H1 (cell line): ENCODE measurements at regions of chr3 and their contacts with region 1.

Region 1: DNA sequence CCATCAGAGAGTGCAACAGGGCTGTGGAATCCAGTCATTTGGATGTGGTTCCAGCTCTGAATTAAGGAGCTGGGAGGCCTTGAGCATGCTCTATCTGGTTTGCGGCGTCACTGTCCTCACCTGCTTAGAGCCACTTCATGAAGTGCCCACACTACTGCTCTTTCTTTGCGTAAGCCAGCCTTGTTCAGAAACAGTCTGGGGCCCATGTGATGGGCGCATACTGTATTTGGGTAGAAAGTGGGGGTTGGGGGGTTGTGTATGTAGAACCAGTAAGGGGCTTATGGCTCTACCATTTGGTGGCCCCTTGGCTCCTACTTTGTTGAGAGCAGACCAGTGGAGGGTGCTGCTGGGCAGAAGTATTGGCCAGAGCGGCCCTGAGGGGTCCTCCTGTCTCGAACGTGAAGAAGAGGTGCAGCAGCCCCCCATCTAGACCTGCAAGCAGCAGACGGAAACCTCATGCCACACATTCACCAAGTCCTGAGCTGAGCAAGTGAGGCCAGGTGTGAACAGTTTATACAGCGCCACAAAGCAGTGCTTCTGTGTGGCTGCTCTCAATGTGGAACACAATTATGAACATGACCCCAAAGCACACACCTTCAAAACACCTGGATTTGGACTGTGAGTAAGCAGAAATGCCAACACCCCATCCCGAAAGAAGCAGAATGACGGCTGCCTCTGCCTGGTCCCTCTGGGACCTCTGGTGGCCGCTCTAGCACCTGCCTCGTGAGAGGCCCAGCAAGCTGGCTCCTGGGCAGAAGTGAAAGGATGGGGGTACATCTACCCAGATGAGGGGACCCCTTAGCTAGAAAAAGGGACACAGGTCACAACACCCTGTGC is 26.6 kb downstream of the SRPRB start:
- DNase-seq: peak in 1 of 2 experiments; percentile 42
- H3K4me3 ChIP-seq: no peak overlapping the region
- H3K27ac ChIP-seq: no peak overlapping the region
- H3K4me1 ChIP-seq: no peaks in the 10 kb centered on the region
- H3K27me3 ChIP-seq: no peaks in the 10 kb centered on the region
- CTCF ChIP-seq: peak in 2 of 3 experiments; percentile 47 to 52; a peak in 3 of 4 replicates
- EP300 ChIP-seq: no peak
- POLR2A ChIP-seq: no peak
- RAD21 ChIP-seq: peak; percentile 51 to 67

Region 2: GRCh38 chr3:133821767-133822638 is 10.2 kb before region 1 on chr3:
- CTCF ChIA-PET with region 1: interaction called, 75 read pairs
- POLR2A ChIA-PET with region 1: interaction called, 7 read pairs
- DNase-seq: peak in 1 of 2 experiments; percentile 38
- H3K4me3 ChIP-seq: no peak overlapping the region
- H3K27ac ChIP-seq: no peak overlapping the region; the same call in 1 of the 2 replicates
- H3K4me1 ChIP-seq: peaks cover 4 to 15% (median 7%) of the 10 kb centered on the region in 4 experiments; a peak in 5 of 7 replicates
- H3K27me3 ChIP-seq: no peaks in the 10 kb centered on the region
- CTCF ChIP-seq: peak in 2 of 3 experiments; percentile 35 to 58; a peak in 2 of 4 replicates
- EP300 ChIP-seq: no peak
- POLR2A ChIP-seq: no peak
- RAD21 ChIP-seq: peak; percentile 32 to 49; a peak in 3 of 4 replicates

Region 3: DNA sequence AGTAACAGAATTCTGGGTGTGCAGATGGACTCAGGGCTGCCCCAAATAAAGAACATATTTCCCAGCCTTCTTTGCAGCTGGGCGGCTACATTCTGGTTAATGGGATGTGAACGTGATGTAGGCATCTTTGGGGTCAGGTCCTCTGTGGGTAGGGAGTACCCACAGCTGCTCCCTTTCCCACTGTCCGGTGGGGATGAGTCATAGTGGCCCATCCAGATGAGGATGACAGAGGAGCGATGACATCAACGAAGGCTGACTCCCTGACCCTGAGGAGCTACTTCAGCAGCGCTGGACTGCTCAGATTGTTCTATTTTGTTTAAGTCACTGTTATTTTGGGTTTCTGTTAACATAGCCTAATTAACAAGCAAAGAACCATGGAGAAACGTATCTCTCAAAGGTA is 11.4 kb after region 1 on chr3:
- CTCF ChIA-PET with region 1: interaction called, 21 read pairs
- POLR2A ChIA-PET with region 1: no interaction called
- DNase-seq: no peak
- H3K4me3 ChIP-seq: no peak overlapping the region
- H3K27ac ChIP-seq: no peak overlapping the region
- H3K4me1 ChIP-seq: peaks cover 0 to 2% (median 0%) of the 10 kb centered on the region in 4 experiments; a peak in 1 of 7 replicates
- H3K27me3 ChIP-seq: no peaks in the 10 kb centered on the region
- CTCF ChIP-seq: no peak
- EP300 ChIP-seq: no peak
- POLR2A ChIP-seq: no peak
- RAD21 ChIP-seq: no peak

Region 4: DNA sequence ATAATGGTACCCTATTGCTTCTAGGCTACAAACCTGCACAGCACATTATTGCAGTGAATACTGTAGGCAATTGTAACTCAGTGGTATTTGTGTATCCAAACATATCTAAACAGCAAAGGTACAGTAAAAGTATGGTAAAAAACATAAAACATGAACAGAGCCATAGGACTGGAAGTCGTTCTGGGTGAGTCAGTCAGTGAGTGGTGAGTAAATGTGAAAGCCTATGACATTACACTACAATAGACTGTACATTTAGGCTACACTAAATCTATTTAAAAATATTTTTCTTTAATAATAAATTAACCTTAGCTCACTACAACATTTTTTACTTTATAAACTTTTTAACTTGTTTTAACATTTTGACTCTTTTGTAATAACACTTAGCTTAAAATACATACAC is 42.2 kb after region 1 on chr3:
- CTCF ChIA-PET with region 1: interaction called, 10 read pairs
- POLR2A ChIA-PET with region 1: no interaction called
- DNase-seq: no peak
- H3K4me3 ChIP-seq: no peak overlapping the region
- H3K27ac ChIP-seq: no peak overlapping the region
- H3K4me1 ChIP-seq: peaks cover 0 to 3% (median 0%) of the 10 kb centered on the region in 4 experiments; a peak in 3 of 7 replicates
- H3K27me3 ChIP-seq: no peaks in the 10 kb centered on the region
- CTCF ChIP-seq: no peak
- EP300 ChIP-seq: no peak
- POLR2A ChIP-seq: no peak
- RAD21 ChIP-seq: no peak

Region 5: DNA sequence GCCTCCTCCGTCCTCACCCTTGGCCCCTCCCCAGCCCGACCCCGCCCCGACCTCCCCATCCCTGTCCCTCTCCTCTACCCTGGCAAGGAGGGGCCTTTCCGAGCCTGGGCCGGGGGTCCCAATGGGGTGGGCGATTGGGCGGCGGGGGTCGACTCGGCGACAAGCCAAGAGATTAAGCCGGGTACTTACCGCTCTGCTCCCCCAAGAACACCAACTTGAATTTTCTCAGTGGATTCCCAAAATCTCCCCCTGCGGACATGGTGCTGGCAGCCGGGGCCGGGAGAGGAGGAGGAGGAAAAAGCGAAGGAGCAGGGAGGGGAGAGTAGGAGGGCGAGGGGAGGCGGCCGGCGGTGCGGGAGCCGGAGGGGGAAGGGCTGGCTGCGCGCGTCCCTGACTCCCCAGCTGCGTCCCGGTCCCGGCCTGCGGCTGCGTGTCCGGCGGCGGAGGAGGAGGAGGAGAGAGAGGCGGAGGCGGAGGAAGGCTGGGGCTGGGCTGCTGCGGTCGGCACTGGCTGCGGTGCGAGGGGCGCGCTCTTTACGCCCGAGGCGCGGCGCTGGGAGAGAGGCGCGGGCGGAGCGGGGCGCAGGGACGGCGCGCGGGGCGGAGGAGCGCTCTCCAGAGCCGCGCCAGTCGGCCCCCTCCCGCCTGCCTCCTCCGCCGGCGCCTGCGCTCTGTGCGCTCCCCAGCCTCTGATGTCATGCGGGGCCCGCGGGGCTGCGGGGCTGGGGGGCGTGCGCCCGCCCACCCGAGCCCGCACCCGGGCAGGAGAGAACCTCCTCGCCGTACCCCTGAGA is 63.2 kb after region 1 on chr3 and contains the start of gene RAB6B:
- CTCF ChIA-PET with region 1: interaction called, 14 read pairs
- POLR2A ChIA-PET with region 1: no interaction called
- DNase-seq: peak in 1 of 2 experiments; percentile 82
- H3K4me3 ChIP-seq: peak within 1 kb of the TSS; percentile 71 to 94 (median 79)
- H3K27ac ChIP-seq: no peak within 1 kb of the TSS
- H3K4me1 ChIP-seq: peaks cover 0 to 15% (median 9%) of the 10 kb centered on the region in 4 experiments; a peak in 6 of 7 replicates
- H3K27me3 ChIP-seq: peaks cover 14 to 45% (median 34%) of the 10 kb centered on the region in 4 experiments
- CTCF ChIP-seq: no peak
- EP300 ChIP-seq: no peak
- POLR2A ChIP-seq: no peak
- RAD21 ChIP-seq: no peak
- total RNA-seq, gene RAB6B: 15.6 and 16.8 TPM in 2 replicates

Region 6: DNA sequence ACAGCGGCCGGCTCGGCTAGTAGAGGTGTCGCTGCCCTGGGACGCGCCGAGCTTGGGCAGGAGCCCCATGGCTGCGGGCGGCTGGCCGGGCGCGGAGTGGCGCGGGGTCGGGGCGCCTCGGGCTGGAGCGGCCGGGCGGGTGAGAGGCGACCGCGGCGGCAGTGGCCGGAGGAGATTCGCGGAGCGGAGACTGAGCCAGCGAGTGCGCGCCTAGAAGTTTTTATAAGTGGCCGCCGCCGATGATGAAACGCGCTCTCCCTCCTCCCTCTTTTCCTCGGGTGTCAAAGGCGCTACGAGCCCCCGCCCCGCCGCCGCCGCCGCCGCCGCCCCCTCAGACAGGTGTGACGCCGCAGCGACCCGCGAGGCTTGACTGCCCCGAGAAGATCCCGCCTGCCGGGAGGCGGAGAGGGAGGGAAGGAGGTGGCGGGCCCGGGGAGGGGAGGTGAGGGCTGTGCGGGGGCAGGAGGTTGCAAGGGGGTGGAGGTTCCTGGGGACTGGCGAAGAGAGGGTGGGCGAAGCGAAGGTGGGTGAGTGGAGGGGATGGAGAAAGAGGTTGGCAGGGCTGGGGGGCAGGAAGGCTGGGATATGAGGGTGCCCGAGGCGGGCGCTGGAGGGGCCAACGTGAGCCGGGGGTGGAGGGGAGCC is 197.7 kb after region 1 on chr3 and contains the start of gene SLCO2A1:
- CTCF ChIA-PET with region 1: no interaction called
- POLR2A ChIA-PET with region 1: no interaction called
- DNase-seq: peak in 1 of 2 experiments; percentile 79
- H3K4me3 ChIP-seq: peak within 1 kb of the TSS; percentile 57 to 70 (median 60)
- H3K27ac ChIP-seq: no peak within 1 kb of the TSS
- H3K4me1 ChIP-seq: peaks cover 0 to 11% (median 10%) of the 10 kb centered on the region in 4 experiments; a peak in 6 of 7 replicates
- H3K27me3 ChIP-seq: peaks cover 14 to 35% (median 29%) of the 10 kb centered on the region in 4 experiments
- CTCF ChIP-seq: no peak
- EP300 ChIP-seq: no peak
- POLR2A ChIP-seq: no peak
- RAD21 ChIP-seq: no peak
- total RNA-seq, gene SLCO2A1: 1.1 TPM in 2 replicates